ENCODE measurements at regions of chr14 and their contacts with region 1.

Region 1: DNA sequence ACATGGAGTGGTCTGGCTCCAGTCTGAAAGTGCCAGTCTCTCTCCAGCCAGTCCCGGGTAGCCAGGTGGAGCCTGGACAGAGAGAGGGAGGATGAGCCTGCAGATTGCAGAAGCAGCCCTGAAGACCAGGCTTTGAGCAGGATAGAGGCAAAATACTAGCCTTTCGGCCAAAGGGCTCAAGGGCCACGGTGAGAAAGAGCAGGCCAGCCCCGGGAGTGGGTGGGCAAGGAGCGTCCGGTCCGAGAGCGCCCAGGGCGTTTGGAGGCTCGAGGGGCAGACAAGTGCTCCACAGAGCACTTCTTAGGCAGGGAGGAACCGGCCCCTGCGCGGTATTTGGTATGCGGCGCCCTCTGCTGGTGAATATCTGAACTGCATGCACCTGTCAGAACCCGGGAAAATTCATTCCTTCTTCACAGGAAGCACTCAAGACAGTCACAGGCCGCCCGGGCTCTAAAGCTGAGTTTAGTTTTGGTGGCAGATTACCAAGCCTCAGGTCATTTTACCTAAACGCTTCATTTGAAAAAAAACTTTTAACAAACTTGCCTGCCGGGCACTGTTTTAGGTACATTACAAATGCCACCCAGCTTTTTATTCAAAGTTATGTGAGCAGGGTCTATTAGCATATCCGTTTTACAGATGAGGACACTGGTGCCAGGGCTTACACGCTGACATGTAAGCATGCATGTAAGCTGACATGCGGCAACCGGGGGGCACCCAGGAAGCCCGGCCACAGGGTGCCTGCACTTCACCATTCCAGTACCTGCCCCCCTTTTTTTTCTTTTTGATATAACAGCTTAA is 21.0 kb upstream of the PSMC1 start:
- DNase-seq: peak in 9 of 10 donors; percentile 9 to 74 (median 43)
- H3K4me3 ChIP-seq: peak overlapping the region in 1 of 59 donors; percentile 5
- H3K27ac ChIP-seq: no peak overlapping the region
- H3K27me3 ChIP-seq: peaks cover 0 to 8% (median 0%) of the 10 kb centered on the region in 45 donors
- CTCF ChIP-seq: peak; percentile 82 to 98 (median 93)

Region 2: DNA sequence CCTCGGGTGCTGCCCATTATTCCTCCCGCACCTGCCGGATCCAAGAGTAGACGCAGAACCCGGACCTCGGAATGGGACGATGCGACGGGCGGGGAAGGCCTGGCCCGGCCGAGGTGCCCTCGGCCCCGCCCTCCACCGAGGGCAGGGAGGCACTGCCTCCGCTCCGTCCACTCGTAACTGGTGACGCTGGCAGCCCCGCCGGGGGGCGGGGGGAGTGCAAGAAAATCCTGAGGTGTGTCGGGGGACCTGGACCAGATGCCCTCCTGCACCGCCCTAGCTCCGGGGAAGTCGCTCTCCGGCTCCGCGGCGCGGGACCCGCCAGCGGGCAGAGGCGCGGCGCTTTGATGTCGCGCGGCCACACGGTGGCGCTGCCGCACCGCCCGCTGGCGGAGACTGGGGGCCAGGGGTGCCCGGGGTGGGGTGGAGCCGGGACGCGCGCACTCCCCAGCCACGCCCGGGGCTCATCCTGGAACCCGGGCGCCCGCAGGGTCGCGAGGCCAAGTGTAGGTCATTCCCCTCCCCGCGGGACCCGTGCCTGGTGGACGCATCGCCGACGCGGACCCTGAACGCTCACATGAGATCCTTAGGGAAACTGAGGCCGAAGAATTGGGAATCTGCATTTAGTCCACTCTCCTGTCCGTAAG is 1208.2 kb before region 1 on chr14:
- intact Hi-C with region 1: loop called (anchors 10 kb)
- DNase-seq: peak in 5 of 10 donors; percentile 29 to 76 (median 52)
- H3K4me3 ChIP-seq: peak overlapping the region; percentile 40 to 85 (median 68)
- H3K27ac ChIP-seq: peak overlapping the region in 3 of 59 donors; percentile 5 to 46 (median 38)
- H3K27me3 ChIP-seq: peaks cover 0 to 2% (median 0%) of the 10 kb centered on the region in 45 donors
- CTCF ChIP-seq: peak; percentile 35 to 96 (median 74)

Region 3: GRCh38 chr14:89033756-89034155 is 1201.6 kb before region 1 on chr14:
- intact Hi-C with region 1: loop called (anchors 10 kb)
- DNase-seq: no peak
- H3K4me3 ChIP-seq: no peak overlapping the region
- H3K27ac ChIP-seq: no peak overlapping the region
- H3K27me3 ChIP-seq: peaks cover 0 to 2% (median 0%) of the 10 kb centered on the region in 45 donors
- CTCF ChIP-seq: no peak

Region 4: GRCh38 chr14:89936658-89937185 is 298.7 kb before region 1 on chr14:
- intact Hi-C with region 1: loop called in 1 of 2 experiments (anchors 5 kb)
- DNase-seq: no peak
- H3K4me3 ChIP-seq: no peak overlapping the region
- H3K27ac ChIP-seq: peak overlapping the region in 3 of 59 donors; percentile 0 to 22 (median 19)
- H3K27me3 ChIP-seq: no peaks in the 10 kb centered on the region
- CTCF ChIP-seq: peak in 33 of 56 donors; percentile 11 to 49 (median 24)

Region 5: GRCh38 chr14:89954070-89955028 is 281.0 kb before region 1 on chr14 and contains the start of gene EFCAB11:
- intact Hi-C with region 1: loop called in 1 of 2 experiments (anchors 10 kb)
- DNase-seq: peak; percentile 93 to 99 (median 98)
- H3K4me3 ChIP-seq: peak within 1 kb of the TSS; percentile 71 to 98 (median 90)
- H3K27ac ChIP-seq: peak within 1 kb of the TSS; percentile 1 to 91 (median 77)
- H3K27me3 ChIP-seq: no peaks in the 10 kb centered on the region
- CTCF ChIP-seq: peak in 15 of 56 donors; percentile 4 to 31 (median 20)
- total RNA-seq, gene EFCAB11: 6.1 to 28.8 (median 11.4) TPM

Region 6: DNA sequence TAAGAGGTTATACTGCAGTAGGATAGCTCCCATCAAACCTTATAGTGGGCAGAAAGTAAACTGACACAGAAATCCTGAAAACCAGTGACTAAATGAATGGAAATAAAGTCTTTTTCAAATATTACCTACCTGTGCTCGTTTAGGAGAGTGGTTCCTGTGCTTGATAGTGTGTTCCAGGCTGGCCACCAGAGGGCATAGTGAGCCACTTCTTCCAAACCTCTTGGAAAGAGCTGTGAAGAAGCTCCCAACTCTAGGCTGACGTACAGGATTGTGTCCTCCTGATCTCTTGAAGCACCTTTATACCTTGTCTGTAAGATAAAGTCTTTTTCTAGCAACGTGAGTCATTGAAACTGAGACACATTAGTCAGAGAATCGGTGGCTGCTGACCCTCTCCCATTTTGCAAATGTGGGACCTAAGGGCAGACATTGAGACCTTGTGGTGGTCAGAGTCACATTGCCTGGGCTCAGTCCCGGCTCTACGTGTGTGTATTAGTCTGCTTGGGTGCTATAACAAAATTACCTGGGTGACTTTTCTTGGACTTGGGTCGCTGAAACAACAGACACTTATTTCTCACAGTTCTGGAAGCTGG is 262.0 kb before region 1 on chr14:
- intact Hi-C with region 1: loop called in 1 of 2 experiments (anchors 2 kb)
- DNase-seq: peak; percentile 60 to 88 (median 80)
- H3K4me3 ChIP-seq: no peak overlapping the region
- H3K27ac ChIP-seq: peak overlapping the region in 1 of 59 donors; percentile 10
- H3K27me3 ChIP-seq: no peaks in the 10 kb centered on the region
- CTCF ChIP-seq: peak; percentile 71 to 98 (median 91)

Region 7: DNA sequence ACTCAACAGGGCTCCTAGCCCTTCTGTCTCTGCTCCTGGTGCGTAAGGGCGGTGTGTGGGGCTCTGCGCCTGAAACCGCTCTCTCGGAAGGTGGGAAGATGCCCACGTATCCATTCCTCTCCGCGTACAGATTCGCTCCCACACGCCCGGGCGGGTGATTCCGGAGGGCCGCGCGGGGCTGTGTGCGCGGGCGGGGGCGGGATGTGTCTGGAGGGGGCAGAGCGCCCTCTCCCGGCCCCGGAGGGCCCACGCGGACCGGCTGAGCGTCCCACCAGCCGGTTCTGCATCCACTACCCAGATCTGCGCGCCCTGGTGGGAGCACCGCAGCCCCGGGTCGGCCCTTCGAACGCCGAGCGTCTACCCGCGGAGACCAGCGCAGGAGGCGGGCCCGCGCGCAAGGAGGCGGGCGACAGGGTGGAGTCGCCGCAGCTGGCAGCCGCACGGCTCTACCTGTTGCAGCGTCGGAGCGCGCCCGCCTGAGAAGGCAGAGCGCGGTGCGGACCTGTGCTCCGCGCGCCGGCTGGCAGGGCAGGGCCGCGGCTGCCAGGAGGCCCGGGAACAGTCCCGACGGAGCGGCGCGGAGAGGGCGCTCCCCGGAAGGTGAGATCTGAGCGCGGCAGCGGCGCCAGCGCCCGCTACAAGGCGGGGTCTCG is 174.9 kb before region 1 on chr14:
- intact Hi-C with region 1: loop called in 1 of 2 experiments (anchors 10 kb)
- DNase-seq: peak; percentile 26 to 81 (median 62)
- H3K4me3 ChIP-seq: peak overlapping the region; percentile 39 to 75 (median 60)
- H3K27ac ChIP-seq: peak overlapping the region in 1 of 59 donors; percentile 37
- H3K27me3 ChIP-seq: peaks cover 0 to 58% (median 25%) of the 10 kb centered on the region in 45 donors
- CTCF ChIP-seq: peak in 55 of 56 donors; percentile 33 to 95 (median 78)

Region 8: GRCh38 chr14:90368946-90369721 is 133.8 kb after region 1 on chr14:
- intact Hi-C with region 1: no loop called
- DNase-seq: peak in 2 of 10 donors; percentile 25 to 43
- H3K4me3 ChIP-seq: no peak overlapping the region
- H3K27ac ChIP-seq: peak overlapping the region in 45 of 59 donors; percentile 1 to 85 (median 45)
- H3K27me3 ChIP-seq: no peaks in the 10 kb centered on the region
- CTCF ChIP-seq: peak in 50 of 56 donors; percentile 4 to 65 (median 34)

Measured in dorsolateral prefrontal cortex (tissue), 120 donors.